Panc1 (cell line): ENCODE measurements at regions of chr12 and their contacts with region 1.

Region 1: GRCh38 chr12:93577222-93577795 is 4.8 kb downstream of the SOCS2 start:
- DNase-seq: no peak
- ATAC-seq: no peak
- H3K4me3 ChIP-seq: no peak overlapping the region
- H3K27ac ChIP-seq: no peak overlapping the region
- H3K4me1 ChIP-seq: peaks cover 12% of the 10 kb centered on the region
- H3K27me3 ChIP-seq: no peaks in the 10 kb centered on the region
- CTCF ChIP-seq: no peak

Region 2: GRCh38 chr12:93677195-93678064 is 100.1 kb after region 1 on chr12 and contains the start of gene CRADD:
- CTCF ChIA-PET with region 1: no interaction called
- POLR2A ChIA-PET with region 1: no interaction called
- in situ Hi-C with region 1: no loop called
- intact Hi-C with region 1: loop called (anchors 5 kb)
- DNase-seq: peak; percentile 83
- ATAC-seq: peak; percentile 91
- H3K4me3 ChIP-seq: peak within 1 kb of the TSS; percentile 74 to 85
- H3K27ac ChIP-seq: peak within 1 kb of the TSS; percentile 96
- H3K4me1 ChIP-seq: peaks cover 18% of the 10 kb centered on the region
- H3K27me3 ChIP-seq: no peaks in the 10 kb centered on the region
- CTCF ChIP-seq: no peak
- total RNA-seq, gene CRADD: 7.0 TPM